Left colon (tissue), 2 donors: ENCODE measurements at regions of chr10 and their contacts with region 1.

Region 1: GRCh38 chr10:93816123-93816747 is 58.5 kb downstream of the LGI1 start:
- DNase-seq: peak; percentile 58 to 79
- ATAC-seq: peak; percentile 66

Region 2: GRCh38 chr10:93697207-93697606 is 119.0 kb before region 1 on chr10:
- intact Hi-C with region 1: loop called (anchors 5 to 10 kb)
- DNase-seq: no peak
- ATAC-seq: no peak

Region 3: DNA sequence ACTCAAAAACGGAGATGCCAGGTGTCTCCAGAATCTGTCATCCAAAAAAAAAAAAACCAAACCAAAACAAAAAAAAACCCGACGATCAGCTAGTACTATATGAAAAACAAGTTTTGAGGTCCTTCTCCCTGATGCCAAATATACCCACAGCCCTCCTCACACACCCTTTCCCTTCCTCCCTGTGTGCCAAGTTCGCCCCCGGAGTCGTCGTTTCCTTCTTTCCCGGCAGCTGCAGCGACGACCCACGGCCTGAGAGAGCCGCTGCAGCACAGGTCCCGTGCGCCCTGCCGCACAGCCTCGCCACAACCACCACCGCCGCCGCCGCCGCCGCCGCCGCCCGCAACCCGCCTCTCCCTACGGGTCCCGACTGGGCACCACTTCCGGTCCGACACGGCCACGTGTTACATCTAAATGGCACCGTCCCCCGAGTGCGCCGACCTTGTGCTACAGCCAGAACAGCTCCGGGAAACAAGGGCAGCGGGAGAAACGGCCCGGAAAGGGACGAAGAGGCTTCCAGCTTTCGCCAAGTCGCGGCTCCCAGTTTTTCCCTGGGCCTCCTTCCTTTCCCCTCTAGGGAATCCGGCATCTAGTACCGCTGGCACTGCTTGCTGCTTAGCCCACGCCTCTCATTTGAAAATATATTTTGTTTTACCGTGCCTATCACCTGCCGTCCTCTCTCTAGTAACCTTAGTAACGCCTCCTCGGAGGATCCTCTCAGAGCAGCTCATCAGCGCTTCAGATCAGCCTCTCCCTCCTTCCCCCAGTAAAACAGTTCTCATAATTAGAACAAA is 113.8 kb before region 1 on chr10 and contains the start of gene FRA10AC1:
- intact Hi-C with region 1: loop called (anchors 5 to 10 kb)
- DNase-seq: peak; percentile 91 to 93
- ATAC-seq: peak; percentile 98
- total RNA-seq, gene FRA10AC1: 8.3 to 14.6 TPM

Region 4: GRCh38 chr10:93911866-93912265 is 95.6 kb after region 1 on chr10:
- intact Hi-C with region 1: no loop called
- DNase-seq: no peak
- ATAC-seq: no peak